ENCODE measurements at regions of chr11 and their contacts with region 1.

Region 1: GRCh38 chr11:118198370-118198769 is 21.9 kb upstream of the SCN2B start:
- DNase-seq: peak; percentile 72 to 91 (median 82)
- ATAC-seq: peak; percentile 42
- H3K4me3 Mint-ChIP-seq: peak overlapping the region in 5 of 10 donors; percentile 21 to 52 (median 36)
- H3K27ac Mint-ChIP-seq: peak overlapping the region; percentile 26 to 93 (median 81)
- H3K4me1 Mint-ChIP-seq: peaks cover 5 to 14% (median 13%) of the 10 kb centered on the region in 4 donors
- H3K27me3 Mint-ChIP-seq: no peaks in the 10 kb centered on the region

Region 2: DNA sequence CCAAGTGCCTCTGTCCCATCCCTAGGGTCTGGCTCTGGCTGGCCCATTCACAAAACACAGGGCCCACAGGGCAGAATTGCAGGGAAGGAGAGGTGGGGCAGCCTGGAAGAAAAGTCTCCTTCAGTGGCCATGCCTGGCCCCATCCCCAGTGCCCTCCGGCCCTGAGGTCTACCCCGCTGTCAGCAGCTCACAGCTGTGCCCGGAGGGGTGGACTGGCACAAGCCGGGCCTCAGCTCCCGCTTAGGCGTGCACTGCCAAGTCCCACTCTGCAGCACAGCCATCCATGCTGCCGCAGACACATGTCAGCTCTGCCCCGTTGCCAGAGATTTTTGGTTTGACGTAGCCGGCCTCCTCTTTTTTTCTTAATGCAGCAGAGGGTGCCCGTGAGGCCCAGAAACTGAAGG is 18.1 kb before region 1 on chr11:
- POLR2A ChIA-PET with region 1: no interaction called
- DNase-seq: peak in 1 of 10 donors; percentile 33
- ATAC-seq: peak; percentile 35 to 48
- H3K4me3 Mint-ChIP-seq: no peak overlapping the region
- H3K27ac Mint-ChIP-seq: no peak overlapping the region
- H3K4me1 Mint-ChIP-seq: peaks cover 0 to 2% (median under 1%) of the 10 kb centered on the region in 4 donors
- H3K27me3 Mint-ChIP-seq: peaks cover 7 to 23% (median 18%) of the 10 kb centered on the region in 5 donors

Region 3: DNA sequence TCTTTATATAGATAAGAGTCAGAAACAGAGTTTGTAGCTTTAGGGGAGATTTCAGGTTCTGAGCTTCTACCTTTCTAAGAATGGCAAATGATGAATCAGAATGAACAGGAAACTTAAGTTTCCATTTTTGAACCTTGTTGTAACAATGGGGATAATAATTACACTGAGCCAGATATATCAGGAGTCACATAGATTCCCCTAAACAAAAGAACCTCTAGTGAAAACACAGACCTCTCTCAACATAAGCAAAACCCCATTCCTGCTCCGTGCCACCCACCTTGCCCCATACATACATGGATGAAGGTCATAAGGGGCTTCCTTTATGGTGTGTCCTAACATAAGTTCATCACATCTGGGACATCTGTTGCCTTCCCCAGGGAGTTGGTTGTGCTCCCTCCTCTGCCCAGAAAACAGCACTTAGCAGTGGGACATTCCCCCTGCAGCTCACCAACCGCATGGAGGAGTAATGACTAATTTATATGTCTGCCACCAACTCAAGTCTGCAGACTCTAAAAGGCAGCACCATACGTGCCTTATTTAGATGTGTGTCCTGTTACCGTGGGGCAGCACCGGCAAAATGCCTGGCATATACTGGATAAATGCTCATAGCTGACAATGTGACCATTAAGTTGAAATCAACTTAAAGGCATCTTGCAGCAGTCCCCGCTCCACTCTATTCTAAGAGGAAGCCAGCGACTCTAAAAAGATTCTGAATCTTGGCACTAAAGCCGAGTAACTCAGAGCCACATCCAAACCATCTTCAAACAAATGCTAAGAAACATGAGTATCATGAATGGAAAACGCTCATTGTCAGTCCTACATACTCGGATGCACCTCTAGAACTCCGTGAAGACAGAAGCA is 18.5 kb after region 1 on chr11:
- POLR2A ChIA-PET with region 1: interaction called, 17 read pairs
- DNase-seq: peak in 1 of 10 donors; percentile 21
- ATAC-seq: peak; percentile 52 to 57
- H3K4me3 Mint-ChIP-seq: peak overlapping the region in 9 of 10 donors; percentile 74 to 90 (median 86)
- H3K27ac Mint-ChIP-seq: peak overlapping the region in 8 of 10 donors; percentile 87 to 96 (median 94)
- H3K4me1 Mint-ChIP-seq: peaks cover 72 to 100% (median 98%) of the 10 kb centered on the region in 4 donors
- H3K27me3 Mint-ChIP-seq: no peaks in the 10 kb centered on the region

Region 4: GRCh38 chr11:118251858-118252652 is 53.7 kb after region 1 on chr11 and contains the start of gene MPZL3:
- POLR2A ChIA-PET with region 1: interaction called, 11 read pairs
- DNase-seq: peak; percentile 64 to 96 (median 91)
- ATAC-seq: peak; percentile 79 to 88
- H3K4me3 Mint-ChIP-seq: peak within 1 kb of the TSS; percentile 95 to 99 (median 98)
- H3K27ac Mint-ChIP-seq: peak within 1 kb of the TSS; percentile 99 to 100 (median 100)
- H3K4me1 Mint-ChIP-seq: peaks cover 14 to 44% (median 35%) of the 10 kb centered on the region in 4 donors
- H3K27me3 Mint-ChIP-seq: peaks cover 0 to 3% (median 0%) of the 10 kb centered on the region in 5 donors
- polyA plus RNA-seq, gene MPZL3: 1.9 to 3.4 (median 3.2) TPM

Region 5: GRCh38 chr11:118290923-118291322 is 92.6 kb after region 1 on chr11:
- POLR2A ChIA-PET with region 1: interaction called, 10 read pairs
- DNase-seq: peak in 9 of 10 donors; percentile 12 to 69 (median 45)
- ATAC-seq: peak; percentile 67 to 82
- H3K4me3 Mint-ChIP-seq: peak overlapping the region in 1 of 10 donors; percentile 8
- H3K27ac Mint-ChIP-seq: peak overlapping the region in 4 of 10 donors; percentile 12 to 78 (median 42)
- H3K4me1 Mint-ChIP-seq: peaks cover 11 to 26% (median 17%) of the 10 kb centered on the region in 4 donors
- H3K27me3 Mint-ChIP-seq: peaks cover 0 to 1% (median 0%) of the 10 kb centered on the region in 5 donors